GM12878 (cell line): ENCODE measurements at regions of chr6 and their contacts with region 1.

Region 1: GRCh38 chr6:159042003-159042825 is 2.6 kb downstream of the TAGAP start:
- DNase-seq: peak; percentile 69
- ATAC-seq: peak; percentile 53
- H3K4me3 ChIP-seq: 0 out of 2 replicates have a peak overlapping the region, but pooled peaks have one; percentile 60
- H3K27ac ChIP-seq: peak overlapping the region; percentile 59
- H3K4me1 ChIP-seq: peaks cover 43% of the 10 kb centered on the region
- H3K27me3 ChIP-seq: no peaks in the 10 kb centered on the region
- CTCF ChIP-seq: peak; percentile 94 to 99 (median 96)
- EP300 ChIP-seq: 0 out of 4 replicates have a peak, but pooled peaks of 1 of the 2 experiments have one; percentile 23
- POLR2A ChIP-seq: no peak
- RAD21 ChIP-seq: peak; percentile 92

Region 2: GRCh38 chr6:159008656-159009288 is 33.4 kb before region 1 on chr6:
- CTCF ChIA-PET with region 1: interaction called, 127 read pairs
- POLR2A ChIA-PET with region 1: interaction called, 9 read pairs
- RAD21 ChIA-PET with region 1: interaction called, 147 read pairs
- SMC1A ChIA-PET with region 1: interaction called, 194 read pairs
- in situ Hi-C with region 1: no loop called
- intact Hi-C with region 1: loop called (anchors 1 kb)
- DNase-seq: no peak
- ATAC-seq: peak; percentile 91
- H3K4me3 ChIP-seq: peak overlapping the region; percentile 60
- H3K27ac ChIP-seq: peak overlapping the region; percentile 58
- H3K4me1 ChIP-seq: no peaks in the 10 kb centered on the region
- H3K27me3 ChIP-seq: no peaks in the 10 kb centered on the region
- CTCF ChIP-seq: peak; percentile 50 to 70 (median 60); a peak in 5 of 6 replicates
- EP300 ChIP-seq: no peak
- POLR2A ChIP-seq: no peak
- RAD21 ChIP-seq: peak; percentile 78

Region 3: GRCh38 chr6:159062564-159062945 is 20.3 kb after region 1 on chr6:
- CTCF ChIA-PET with region 1: interaction called, 5 read pairs
- POLR2A ChIA-PET with region 1: interaction called, 22 read pairs
- RAD21 ChIA-PET with region 1: interaction called, 26 read pairs
- SMC1A ChIA-PET with region 1: interaction called, 34 read pairs
- in situ Hi-C with region 1: no loop called
- intact Hi-C with region 1: no loop called
- DNase-seq: no peak
- ATAC-seq: peak; percentile 67
- H3K4me3 ChIP-seq: no peak overlapping the region
- H3K27ac ChIP-seq: no peak overlapping the region
- H3K4me1 ChIP-seq: peaks cover 11% of the 10 kb centered on the region
- H3K27me3 ChIP-seq: peaks cover 0 to 4% of the 10 kb centered on the region in 2 experiments; a peak in 1 of 4 replicates
- CTCF ChIP-seq: no peak
- EP300 ChIP-seq: no peak
- POLR2A ChIP-seq: no peak
- RAD21 ChIP-seq: no peak

Region 4: DNA sequence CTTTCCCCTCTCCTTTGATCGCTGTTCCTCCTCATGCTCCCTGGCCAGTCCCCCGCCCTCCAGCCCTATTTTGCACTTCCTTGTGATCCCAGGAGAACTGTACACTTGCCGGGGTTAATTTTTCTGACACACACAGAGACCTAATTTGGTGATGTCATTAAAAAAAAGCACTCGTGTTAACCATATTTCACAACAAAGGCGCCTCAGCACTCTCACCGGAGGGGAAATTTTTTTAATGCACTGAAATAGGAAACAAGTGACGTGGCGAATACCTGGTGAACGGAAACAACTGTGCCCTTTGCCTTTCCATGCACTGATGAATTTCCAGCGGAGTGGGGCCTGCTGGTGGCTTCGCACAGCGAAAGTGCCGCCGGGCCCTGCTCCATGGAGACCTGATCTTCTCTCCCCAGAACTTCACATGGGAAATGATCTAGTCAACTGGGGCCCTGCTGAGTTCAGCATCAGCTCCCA is 56.5 kb after region 1 on chr6:
- CTCF ChIA-PET with region 1: interaction called, 481 read pairs
- POLR2A ChIA-PET with region 1: interaction called, 79 read pairs
- RAD21 ChIA-PET with region 1: interaction called, 298 read pairs
- SMC1A ChIA-PET with region 1: interaction called, 415 read pairs
- in situ Hi-C with region 1: no loop called
- intact Hi-C with region 1: no loop called
- DNase-seq: no peak
- ATAC-seq: peak; percentile 52
- H3K4me3 ChIP-seq: no peak overlapping the region
- H3K27ac ChIP-seq: no peak overlapping the region
- H3K4me1 ChIP-seq: peaks cover 16% of the 10 kb centered on the region
- H3K27me3 ChIP-seq: no peaks in the 10 kb centered on the region
- CTCF ChIP-seq: no peak
- EP300 ChIP-seq: peak in 1 of 2 experiments; percentile 44; a peak in 1 of 4 replicates
- POLR2A ChIP-seq: no peak
- RAD21 ChIP-seq: no peak

Region 5: DNA sequence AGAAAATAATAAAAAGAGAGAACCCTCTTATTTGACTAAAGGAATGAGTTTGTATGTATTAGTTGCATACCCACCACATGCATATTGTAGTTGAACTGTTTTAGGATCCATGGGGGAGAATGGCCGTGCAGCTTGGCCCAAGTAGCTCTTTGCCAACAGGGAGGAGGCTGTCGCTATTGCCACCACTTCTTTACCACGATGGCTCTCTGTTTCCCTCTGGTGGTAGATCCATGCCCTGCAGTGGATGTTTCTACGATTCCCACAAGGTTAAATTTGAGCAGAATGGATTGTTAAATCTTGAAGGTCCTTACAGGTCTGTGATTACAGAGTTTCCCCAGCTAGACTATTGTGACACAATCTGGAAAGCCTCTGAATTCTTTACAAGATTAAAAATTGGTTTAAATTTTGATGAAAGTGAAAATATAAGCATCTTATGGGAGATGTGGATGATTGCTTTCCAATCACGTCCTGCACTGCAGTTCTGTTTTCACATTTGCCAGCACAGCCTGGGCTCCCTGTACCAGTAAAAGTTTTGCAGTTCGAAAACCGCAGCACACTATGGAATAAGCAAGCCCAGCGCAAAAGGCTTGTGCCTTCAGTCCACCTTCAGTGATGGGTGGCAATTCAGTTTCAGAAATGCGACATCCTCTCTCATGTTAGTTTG is 92.6 kb after region 1 on chr6:
- CTCF ChIA-PET with region 1: interaction called, 115 read pairs
- POLR2A ChIA-PET with region 1: interaction called, 17 read pairs
- RAD21 ChIA-PET with region 1: interaction called, 62 read pairs
- SMC1A ChIA-PET with region 1: interaction called, 85 read pairs
- in situ Hi-C with region 1: no loop called
- intact Hi-C with region 1: loop called (anchors 1 kb)
- DNase-seq: peak; percentile 36
- ATAC-seq: peak; percentile 95
- H3K4me3 ChIP-seq: no peak overlapping the region
- H3K27ac ChIP-seq: no peak overlapping the region
- H3K4me1 ChIP-seq: no peaks in the 10 kb centered on the region
- H3K27me3 ChIP-seq: peaks cover 0 to 2% of the 10 kb centered on the region in 2 experiments; a peak in 1 of 4 replicates
- CTCF ChIP-seq: peak; percentile 89 to 97 (median 96)
- EP300 ChIP-seq: no peak
- POLR2A ChIP-seq: no peak
- RAD21 ChIP-seq: peak; percentile 98

Region 6: DNA sequence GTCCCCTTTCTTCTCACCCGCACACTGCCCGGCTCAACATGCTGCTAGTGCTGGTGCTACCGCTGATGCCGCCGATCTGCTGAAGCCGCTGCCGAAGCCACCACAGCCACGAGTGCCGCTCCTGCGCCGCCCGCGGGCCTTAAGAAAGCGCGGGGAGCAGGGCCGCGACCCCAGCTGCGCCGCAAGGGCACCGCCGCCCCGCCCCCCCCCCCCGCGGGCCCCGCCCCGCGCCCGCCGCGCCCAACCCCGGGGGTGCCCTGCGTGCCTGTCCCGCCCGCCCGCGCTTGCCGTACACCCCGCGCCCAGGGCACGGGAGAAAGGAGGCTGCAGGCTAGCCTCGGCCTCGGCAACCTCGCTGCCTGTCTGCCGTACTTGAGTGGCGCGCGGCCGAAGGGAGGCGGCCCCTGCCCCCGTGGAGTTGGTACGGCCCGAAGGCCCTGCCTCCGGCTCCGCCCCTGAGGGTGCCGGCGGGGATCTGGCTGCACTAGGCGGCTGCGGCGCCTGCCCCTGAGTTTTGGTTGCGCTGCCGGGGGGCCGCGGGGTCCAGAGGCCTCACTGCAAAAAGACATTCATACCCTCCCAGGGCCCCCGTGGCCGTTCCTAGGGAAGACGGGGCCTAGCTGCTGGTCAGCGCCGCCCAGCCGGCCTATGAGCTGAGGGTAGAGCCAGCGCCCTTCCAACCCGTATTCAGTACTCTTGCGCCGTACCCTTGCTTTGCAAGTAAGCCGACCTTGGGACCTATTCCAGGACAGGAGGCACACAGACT is 651.1 kb after region 1 on chr6 and contains the start of gene SOD2:
- CTCF ChIA-PET with region 1: no interaction called
- POLR2A ChIA-PET with region 1: no interaction called
- RAD21 ChIA-PET with region 1: no interaction called
- SMC1A ChIA-PET with region 1: no interaction called
- in situ Hi-C with region 1: no loop called
- intact Hi-C with region 1: no loop called
- DNase-seq: no peak
- ATAC-seq: peak; percentile 86
- H3K4me3 ChIP-seq: peak within 1 kb of the TSS; percentile 78
- H3K27ac ChIP-seq: peak within 1 kb of the TSS; percentile 88
- H3K4me1 ChIP-seq: peaks cover 10% of the 10 kb centered on the region
- H3K27me3 ChIP-seq: no peaks in the 10 kb centered on the region
- CTCF ChIP-seq: peak in 1 of 3 experiments; percentile 5; a peak in 1 of 6 replicates
- EP300 ChIP-seq: no peak
- POLR2A ChIP-seq: peak; percentile 96
- RAD21 ChIP-seq: no peak
- polyA plus RNA-seq, gene SOD2: 12.1 to 20.9 TPM